IMR-90 (cell line): ENCODE measurements at regions of chr4 and their contacts with region 1.

Region 1: DNA sequence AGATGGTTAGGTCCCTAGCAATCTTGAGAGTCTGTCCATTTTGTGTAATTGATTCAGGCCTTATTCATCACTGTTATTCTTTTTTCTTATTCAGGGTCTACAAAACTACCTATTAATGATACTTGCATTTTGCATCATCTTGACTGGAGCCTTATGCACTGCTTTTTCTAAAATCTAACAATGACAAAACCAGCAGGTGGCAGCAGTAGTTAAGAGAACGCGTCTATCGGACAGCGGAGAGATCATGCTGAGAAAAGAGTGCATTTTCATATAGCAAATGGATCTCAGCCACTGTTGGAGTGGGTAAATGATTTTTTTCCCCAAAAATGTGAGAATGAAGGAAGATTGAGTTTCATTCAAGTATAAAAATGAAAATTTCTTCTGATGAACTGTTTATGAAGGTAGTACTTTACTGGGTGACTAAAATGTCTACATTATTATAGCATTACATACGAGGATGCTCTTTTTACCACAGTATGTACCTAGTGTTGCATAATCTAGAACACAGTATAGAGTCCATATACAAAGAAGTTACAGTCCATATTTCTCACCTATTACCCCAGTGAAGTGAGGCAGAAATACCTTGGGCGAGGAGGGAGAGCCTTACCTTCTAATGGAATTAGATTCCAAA is 43.2 kb downstream of the TMEM144 start:
- DNase-seq: peak; percentile 63
- ATAC-seq: peak; percentile 88
- H3K4me3 ChIP-seq: no peak overlapping the region
- H3K27ac ChIP-seq: no peak overlapping the region
- H3K4me1 ChIP-seq: no peaks in the 10 kb centered on the region
- H3K27me3 ChIP-seq: peaks cover 2% of the 10 kb centered on the region; the same call in 1 of the 2 replicates
- CTCF ChIP-seq: peak; percentile 71
- POLR2A ChIP-seq: no peak
- RAD21 ChIP-seq: peak; percentile 73

Region 2: DNA sequence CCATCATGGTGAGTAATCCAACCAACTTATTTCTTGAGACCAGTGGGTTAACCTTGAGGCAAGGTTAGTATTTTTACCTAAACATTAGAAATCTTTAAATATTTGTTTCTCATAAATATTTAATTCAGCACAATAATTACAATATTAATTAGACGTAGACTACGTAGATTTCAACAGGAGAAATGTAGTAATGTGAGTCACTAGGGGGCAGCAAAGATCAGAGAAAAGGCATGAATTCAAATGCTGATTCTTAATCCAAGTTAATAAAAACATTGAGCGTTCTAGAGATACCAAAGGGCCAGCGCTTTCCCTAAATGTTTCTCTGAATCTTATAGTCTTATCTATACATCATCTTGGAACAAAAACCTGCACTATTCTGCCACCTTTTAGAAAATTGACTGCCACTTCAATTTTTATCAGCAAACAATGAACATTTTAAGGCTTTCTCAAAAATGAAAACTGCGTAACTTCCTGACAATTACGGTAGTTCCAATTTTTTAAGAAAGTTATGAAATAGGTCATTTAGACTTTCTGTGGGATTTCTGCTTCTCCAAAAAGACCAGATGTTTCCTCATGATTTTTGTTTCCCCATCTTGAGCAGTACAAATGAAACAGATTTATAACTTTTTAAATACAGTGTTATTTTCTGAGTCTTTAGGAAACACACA is 261.3 kb before region 1 on chr4:
- CTCF ChIA-PET with region 1: no interaction called
- POLR2A ChIA-PET with region 1: no interaction called
- dilution Hi-C with region 1: no loop called
- in situ Hi-C with region 1: no loop called
- intact Hi-C with region 1: loop called (anchors 1 kb)
- DNase-seq: peak; percentile 77
- ATAC-seq: peak; percentile 81
- H3K4me3 ChIP-seq: no peak overlapping the region
- H3K27ac ChIP-seq: no peak overlapping the region
- H3K4me1 ChIP-seq: peaks cover 6% of the 10 kb centered on the region
- H3K27me3 ChIP-seq: no peaks in the 10 kb centered on the region; the same call in 1 of the 2 replicates
- CTCF ChIP-seq: peak; percentile 87
- POLR2A ChIP-seq: no peak
- RAD21 ChIP-seq: peak; percentile 90

Region 3: GRCh38 chr4:158172261-158173258 is 80.9 kb before region 1 on chr4 and contains the start of gene GASK1B:
- CTCF ChIA-PET with region 1: no interaction called
- POLR2A ChIA-PET with region 1: no interaction called
- dilution Hi-C with region 1: no loop called
- in situ Hi-C with region 1: no loop called
- intact Hi-C with region 1: loop called (anchors 5 kb)
- DNase-seq: peak; percentile 64
- ATAC-seq: peak; percentile 81
- H3K4me3 ChIP-seq: peak within 1 kb of the TSS; percentile 30
- H3K27ac ChIP-seq: peak within 1 kb of the TSS; percentile 71; the same call in 1 of the 2 replicates
- H3K4me1 ChIP-seq: peaks cover 17% of the 10 kb centered on the region
- H3K27me3 ChIP-seq: no peaks in the 10 kb centered on the region
- CTCF ChIP-seq: peak; percentile 81
- POLR2A ChIP-seq: no peak
- RAD21 ChIP-seq: peak; percentile 83
- total RNA-seq, gene GASK1B: 4.1 and 6.7 TPM in 2 replicates

Region 4: DNA sequence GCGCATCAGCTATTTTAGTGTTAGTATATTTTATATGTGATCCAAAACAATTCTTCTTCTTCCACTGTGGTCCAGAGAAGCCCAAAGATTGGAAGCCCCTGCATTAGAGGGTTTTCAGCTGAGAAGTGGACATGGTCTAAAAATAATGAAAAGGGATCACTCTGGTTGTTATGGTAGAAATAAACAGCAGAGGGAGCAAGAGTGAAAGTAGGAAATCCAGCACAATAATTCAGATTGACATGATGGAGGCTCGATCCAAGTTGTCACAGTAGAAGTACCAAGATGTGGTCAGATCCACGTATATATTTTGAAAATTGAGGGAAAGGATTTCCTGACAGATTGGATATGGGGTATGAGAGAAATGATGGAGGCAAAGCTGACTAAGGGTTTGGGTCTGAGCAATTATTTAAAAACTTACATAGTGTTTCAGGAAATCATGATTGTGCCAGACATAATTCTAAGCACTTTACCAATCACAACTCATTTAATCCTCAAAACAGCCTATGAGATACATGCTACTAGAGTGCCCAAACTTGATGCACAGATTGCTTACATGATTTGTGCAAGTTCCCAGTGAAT is 60.2 kb before region 1 on chr4:
- CTCF ChIA-PET with region 1: interaction called, 4 read pairs
- POLR2A ChIA-PET with region 1: no interaction called
- dilution Hi-C with region 1: no loop called
- in situ Hi-C with region 1: no loop called
- intact Hi-C with region 1: loop called (anchors 1 kb)
- DNase-seq: peak; percentile 31
- ATAC-seq: peak; percentile 66; the same call in 1 of the 2 replicates
- H3K4me3 ChIP-seq: no peak overlapping the region
- H3K27ac ChIP-seq: no peak overlapping the region
- H3K4me1 ChIP-seq: no peaks in the 10 kb centered on the region
- H3K27me3 ChIP-seq: peaks cover 7% of the 10 kb centered on the region; the same call in 1 of the 2 replicates
- CTCF ChIP-seq: peak; percentile 61
- POLR2A ChIP-seq: no peak
- RAD21 ChIP-seq: peak; percentile 46

Region 5: GRCh38 chr4:158322109-158322508 is 68.6 kb after region 1 on chr4:
- CTCF ChIA-PET with region 1: no interaction called
- POLR2A ChIA-PET with region 1: no interaction called
- dilution Hi-C with region 1: no loop called
- in situ Hi-C with region 1: no loop called
- intact Hi-C with region 1: no loop called
- DNase-seq: no peak
- ATAC-seq: peak; percentile 73
- H3K4me3 ChIP-seq: no peak overlapping the region
- H3K27ac ChIP-seq: no peak overlapping the region
- H3K4me1 ChIP-seq: no peaks in the 10 kb centered on the region
- H3K27me3 ChIP-seq: no peaks in the 10 kb centered on the region
- CTCF ChIP-seq: no peak
- POLR2A ChIP-seq: no peak
- RAD21 ChIP-seq: no peak

Region 6: GRCh38 chr4:158682066-158682465 is 428.6 kb after region 1 on chr4:
- CTCF ChIA-PET with region 1: no interaction called
- POLR2A ChIA-PET with region 1: no interaction called
- dilution Hi-C with region 1: no loop called
- in situ Hi-C with region 1: no loop called
- intact Hi-C with region 1: no loop called
- DNase-seq: no peak
- ATAC-seq: no peak
- H3K4me3 ChIP-seq: no peak overlapping the region
- H3K27ac ChIP-seq: no peak overlapping the region
- H3K4me1 ChIP-seq: no peaks in the 10 kb centered on the region
- H3K27me3 ChIP-seq: no peaks in the 10 kb centered on the region
- CTCF ChIP-seq: no peak
- POLR2A ChIP-seq: no peak
- RAD21 ChIP-seq: no peak

Region 7: DNA sequence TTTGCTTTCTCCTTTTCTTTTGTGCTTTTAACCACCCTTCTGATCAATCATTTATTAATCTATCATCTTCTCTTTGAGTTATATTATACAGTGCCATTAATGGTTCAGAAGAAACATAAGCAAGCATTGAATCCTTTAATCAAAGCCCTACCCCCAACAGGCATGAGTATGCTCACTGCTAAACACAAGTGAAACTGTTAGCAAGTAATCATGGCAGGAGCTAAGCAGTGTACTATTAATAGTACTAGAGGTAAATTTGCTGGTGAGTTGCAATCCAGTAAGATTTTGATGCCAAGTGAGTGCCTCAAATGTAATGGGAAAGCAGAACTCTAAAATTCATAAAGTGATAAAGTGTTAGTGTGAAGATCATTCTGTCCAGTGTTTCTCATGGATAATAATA is 572.6 kb after region 1 on chr4:
- CTCF ChIA-PET with region 1: no interaction called
- POLR2A ChIA-PET with region 1: no interaction called
- dilution Hi-C with region 1: no loop called
- in situ Hi-C with region 1: loop called (anchors 25 kb)
- intact Hi-C with region 1: no loop called
- DNase-seq: peak; percentile 26
- ATAC-seq: no peak
- H3K4me3 ChIP-seq: no peak overlapping the region
- H3K27ac ChIP-seq: no peak overlapping the region
- H3K4me1 ChIP-seq: peaks cover 15% of the 10 kb centered on the region
- H3K27me3 ChIP-seq: no peaks in the 10 kb centered on the region
- CTCF ChIP-seq: no peak
- POLR2A ChIP-seq: no peak
- RAD21 ChIP-seq: no peak

Region 8: DNA sequence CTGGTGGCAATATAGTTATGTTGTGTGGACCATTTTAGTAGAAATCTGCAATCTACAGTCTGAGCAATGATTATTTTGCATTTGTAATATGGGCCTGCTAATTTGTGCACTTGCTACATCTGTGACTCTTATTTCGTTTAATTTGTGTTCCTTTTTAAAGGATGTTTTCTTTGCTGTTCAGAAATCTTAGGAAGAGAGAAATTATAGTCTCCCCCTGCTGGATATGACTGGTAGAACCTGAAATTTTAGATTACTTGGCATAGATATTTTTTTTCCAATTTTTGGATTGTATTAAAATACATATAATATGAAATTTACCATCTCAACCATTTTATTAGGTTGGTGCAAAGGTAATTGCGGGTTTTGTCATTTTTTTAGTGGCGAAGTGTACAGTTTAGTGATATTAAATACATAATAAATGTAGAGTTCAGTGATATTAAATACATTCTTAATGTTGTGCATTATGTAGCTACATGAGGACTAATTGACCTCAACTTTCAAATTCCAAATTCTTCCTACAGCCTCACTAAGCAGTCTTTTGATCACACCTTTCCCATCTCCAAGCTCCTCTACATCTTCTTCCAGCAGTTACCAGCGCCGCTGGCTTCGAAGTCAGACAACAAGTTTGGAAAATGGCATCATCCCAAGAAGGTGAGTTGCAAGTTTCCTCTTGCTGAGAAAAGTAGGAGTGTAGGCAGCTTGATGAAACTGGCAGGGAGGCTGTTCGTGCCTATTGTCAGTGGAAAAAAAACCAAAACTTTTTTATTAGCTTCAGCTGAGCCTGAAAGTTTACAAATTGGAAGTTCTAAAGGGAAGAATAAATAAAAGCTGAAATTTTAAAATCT is 597.6 kb after region 1 on chr4:
- CTCF ChIA-PET with region 1: no interaction called
- POLR2A ChIA-PET with region 1: no interaction called
- dilution Hi-C with region 1: no loop called
- in situ Hi-C with region 1: loop called (anchors 25 kb)
- intact Hi-C with region 1: loop called (anchors 2 kb)
- DNase-seq: peak; percentile 44
- ATAC-seq: peak; percentile 48; the same call in 1 of the 2 replicates
- H3K4me3 ChIP-seq: no peak overlapping the region
- H3K27ac ChIP-seq: no peak overlapping the region
- H3K4me1 ChIP-seq: no peaks in the 10 kb centered on the region
- H3K27me3 ChIP-seq: no peaks in the 10 kb centered on the region
- CTCF ChIP-seq: peak; percentile 79
- POLR2A ChIP-seq: no peak
- RAD21 ChIP-seq: peak; percentile 68

Region 9: DNA sequence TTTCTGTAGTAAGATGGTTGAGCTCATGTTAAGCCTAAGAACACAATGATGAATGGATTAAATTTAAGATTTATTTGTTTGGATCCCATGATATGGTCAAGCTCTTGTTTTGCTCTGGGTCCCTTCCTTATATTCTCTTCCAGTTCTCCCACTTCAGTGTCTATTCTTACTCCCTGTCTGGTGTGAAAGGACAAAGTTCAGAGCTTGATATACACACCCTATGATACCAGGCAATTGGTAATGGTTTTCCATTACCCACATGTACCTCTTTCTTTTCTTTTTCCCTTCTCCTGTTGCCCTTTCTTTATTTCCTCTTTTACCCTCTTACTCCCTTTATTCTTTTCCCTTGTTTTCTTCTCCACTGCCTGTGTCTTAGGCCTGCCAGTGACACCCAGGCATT is 1073.0 kb after region 1 on chr4:
- CTCF ChIA-PET with region 1: no interaction called
- POLR2A ChIA-PET with region 1: no interaction called
- dilution Hi-C with region 1: no loop called
- in situ Hi-C with region 1: no loop called
- intact Hi-C with region 1: no loop called
- DNase-seq: no peak
- ATAC-seq: no peak
- H3K4me3 ChIP-seq: no peak overlapping the region
- H3K27ac ChIP-seq: no peak overlapping the region
- H3K4me1 ChIP-seq: no peaks in the 10 kb centered on the region
- H3K27me3 ChIP-seq: no peaks in the 10 kb centered on the region
- CTCF ChIP-seq: no peak
- POLR2A ChIP-seq: no peak
- RAD21 ChIP-seq: no peak